MCF 10A (cell line): ENCODE measurements at regions of chr21 and their contacts with region 1.

Region 1: GRCh38 chr21:39349211-39350093 is 564 bp upstream of the HMGN1 start:
- DNase-seq: peak; percentile 97
- H3K4me3 Mint-ChIP-seq: peak overlapping the region; percentile 89
- H3K27ac Mint-ChIP-seq: peak overlapping the region; percentile 79
- H3K4me1 Mint-ChIP-seq: peaks cover 34% of the 10 kb centered on the region
- H3K27me3 Mint-ChIP-seq: no peaks in the 10 kb centered on the region
- CTCF ChIP-seq: no peak

Region 2: GRCh38 chr21:39183237-39184007 is 166.0 kb before region 1 on chr21 and contains the start of gene PSMG1:
- CTCF ChIA-PET with region 1: no interaction called
- POLR2A ChIA-PET with region 1: interaction called, 21 read pairs
- intact Hi-C with region 1: no loop called
- DNase-seq: peak; percentile 95
- H3K4me3 Mint-ChIP-seq: peak within 1 kb of the TSS; percentile 99
- H3K27ac Mint-ChIP-seq: peak within 1 kb of the TSS; percentile 95
- H3K4me1 Mint-ChIP-seq: peaks cover 33% of the 10 kb centered on the region
- H3K27me3 Mint-ChIP-seq: no peaks in the 10 kb centered on the region
- CTCF ChIP-seq: no peak
- total RNA-seq, gene PSMG1: 79.9 and 116 TPM in 2 replicates

Region 3: GRCh38 chr21:39313571-39314142 is 35.8 kb before region 1 on chr21 and contains the start of gene BRWD1:
- CTCF ChIA-PET with region 1: no interaction called
- POLR2A ChIA-PET with region 1: interaction called, 226 read pairs
- intact Hi-C with region 1: loop called (anchors 1 kb)
- DNase-seq: peak; percentile 78
- H3K4me3 Mint-ChIP-seq: peak within 1 kb of the TSS; percentile 76
- H3K27ac Mint-ChIP-seq: peak within 1 kb of the TSS; percentile 94
- H3K4me1 Mint-ChIP-seq: peaks cover 20% of the 10 kb centered on the region
- H3K27me3 Mint-ChIP-seq: no peaks in the 10 kb centered on the region
- CTCF ChIP-seq: no peak
- total RNA-seq, gene BRWD1: 36.0 and 45.4 TPM in 2 replicates

Region 4: GRCh38 chr21:39332175-39332574 is 17.3 kb before region 1 on chr21:
- CTCF ChIA-PET with region 1: no interaction called
- POLR2A ChIA-PET with region 1: interaction called, 37 read pairs
- intact Hi-C with region 1: no loop called
- DNase-seq: no peak
- H3K4me3 Mint-ChIP-seq: no peak overlapping the region
- H3K27ac Mint-ChIP-seq: no peak overlapping the region
- H3K4me1 Mint-ChIP-seq: no peaks in the 10 kb centered on the region
- H3K27me3 Mint-ChIP-seq: no peaks in the 10 kb centered on the region
- CTCF ChIP-seq: no peak

Region 5: GRCh38 chr21:39373644-39374043 is 24.2 kb after region 1 on chr21:
- CTCF ChIA-PET with region 1: no interaction called
- POLR2A ChIA-PET with region 1: interaction called, 12 read pairs
- intact Hi-C with region 1: no loop called
- DNase-seq: peak; percentile 39
- H3K4me3 Mint-ChIP-seq: no peak overlapping the region
- H3K27ac Mint-ChIP-seq: no peak overlapping the region
- H3K4me1 Mint-ChIP-seq: peaks cover 7% of the 10 kb centered on the region
- H3K27me3 Mint-ChIP-seq: no peaks in the 10 kb centered on the region
- CTCF ChIP-seq: peak; percentile 32

Region 6: GRCh38 chr21:39379986-39380891 is 30.8 kb after region 1 on chr21:
- CTCF ChIA-PET with region 1: interaction called, 5 read pairs
- POLR2A ChIA-PET with region 1: interaction called, 48 read pairs
- intact Hi-C with region 1: loop called (anchors 2 kb)
- DNase-seq: peak; percentile 92
- H3K4me3 Mint-ChIP-seq: peak overlapping the region; percentile 90
- H3K27ac Mint-ChIP-seq: peak overlapping the region; percentile 95
- H3K4me1 Mint-ChIP-seq: peaks cover 12% of the 10 kb centered on the region
- H3K27me3 Mint-ChIP-seq: no peaks in the 10 kb centered on the region
- CTCF ChIP-seq: no peak

Region 7: DNA sequence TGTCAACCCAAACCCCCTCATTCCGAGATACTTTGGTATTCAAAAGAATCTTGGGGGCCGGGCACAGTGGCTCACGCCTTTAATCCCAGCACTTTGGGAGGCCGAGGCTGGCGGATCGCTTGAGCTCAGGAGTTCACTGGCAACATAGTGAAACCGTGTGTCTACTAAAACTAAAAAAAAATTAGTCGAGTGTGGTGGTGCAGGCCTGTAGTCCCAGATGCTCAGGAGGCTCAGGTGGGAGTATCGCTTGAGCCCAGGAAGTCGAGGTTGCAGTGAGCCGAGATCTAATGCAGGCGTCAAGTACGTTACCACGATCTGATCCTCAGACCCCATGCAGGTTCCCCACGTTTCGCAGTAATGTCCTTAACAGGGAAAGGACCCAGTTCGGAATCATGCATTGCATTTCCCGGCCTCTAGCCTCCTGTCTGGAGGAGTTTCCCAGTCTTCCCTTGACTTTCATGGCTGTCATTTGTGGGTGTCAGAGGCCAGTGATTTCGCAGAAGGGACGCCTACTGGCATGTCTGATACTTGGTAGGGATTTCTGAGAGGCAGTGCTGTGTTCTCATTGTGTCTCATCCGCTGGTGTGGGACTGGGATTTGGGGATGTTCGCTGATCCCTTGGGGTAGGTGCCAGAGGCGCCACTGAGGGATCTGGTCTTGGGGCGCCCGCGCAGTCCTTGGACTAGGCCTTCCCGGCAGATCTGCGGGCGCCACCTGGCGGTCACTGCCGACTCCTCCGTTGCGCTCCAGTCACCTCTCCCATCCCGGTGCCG is 38.8 kb after region 1 on chr21:
- CTCF ChIA-PET with region 1: interaction called, 5 read pairs
- POLR2A ChIA-PET with region 1: interaction called, 53 read pairs
- intact Hi-C with region 1: loop called (anchors 1 kb)
- DNase-seq: peak; percentile 88
- H3K4me3 Mint-ChIP-seq: peak overlapping the region; percentile 68
- H3K27ac Mint-ChIP-seq: peak overlapping the region; percentile 31
- H3K4me1 Mint-ChIP-seq: peaks cover 10% of the 10 kb centered on the region
- H3K27me3 Mint-ChIP-seq: no peaks in the 10 kb centered on the region
- CTCF ChIP-seq: peak; percentile 85